Ascending aorta (tissue), 2 donors: ENCODE measurements at regions of chr21 and their contacts with region 1.

Region 1: DNA sequence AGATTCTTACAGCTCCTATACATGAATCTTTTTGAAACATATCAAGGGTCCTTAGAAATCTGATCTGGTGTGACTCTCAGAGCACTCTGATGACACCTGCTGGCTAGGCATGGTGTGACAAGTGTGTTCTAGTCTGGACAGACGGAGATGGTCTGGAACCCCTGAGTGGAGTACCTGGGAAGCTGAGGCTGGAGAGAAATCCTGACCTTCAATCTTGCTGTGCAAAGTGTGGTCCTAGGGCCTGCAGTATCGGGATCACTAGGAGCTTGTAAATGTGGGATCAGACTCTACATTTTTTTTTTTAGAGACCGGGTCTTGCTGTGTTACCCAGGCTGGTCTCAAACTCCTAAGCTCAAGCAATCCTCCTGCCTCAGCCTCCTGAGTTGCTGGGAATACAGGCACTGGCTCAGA is 78.6 kb upstream of the SOD1 start:
- DNase-seq: peak in 1 of 2 donors; percentile 75
- H3K4me3 ChIP-seq: no peak overlapping the region
- H3K27ac ChIP-seq: no peak overlapping the region
- H3K4me1 ChIP-seq: no peaks in the 10 kb centered on the region
- H3K27me3 ChIP-seq: no peaks in the 10 kb centered on the region
- CTCF ChIP-seq: peak; percentile 40 to 65 (median 59)

Region 2: DNA sequence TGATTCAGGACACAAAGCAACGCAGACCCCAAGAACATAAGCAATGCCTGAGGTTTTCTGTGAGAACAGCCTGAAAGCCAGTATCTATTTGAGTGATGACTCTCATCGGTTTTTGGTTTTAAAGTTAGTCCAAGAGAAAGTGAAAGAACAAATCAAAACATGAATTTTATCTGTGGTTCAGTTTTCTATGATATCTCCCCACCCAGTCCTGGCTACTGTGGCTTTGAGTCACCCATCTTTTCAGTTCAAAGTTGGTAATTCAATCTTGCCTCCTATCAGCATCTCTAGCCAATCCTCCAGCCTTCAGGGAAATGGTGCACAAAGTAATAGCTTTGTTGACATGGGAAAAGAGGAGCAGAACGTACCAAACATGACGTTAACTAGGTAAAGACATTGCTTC is 502.1 kb before region 1 on chr21:
- intact Hi-C with region 1: no loop called
- DNase-seq: no peak
- H3K4me3 ChIP-seq: no peak overlapping the region
- H3K27ac ChIP-seq: no peak overlapping the region
- H3K4me1 ChIP-seq: no peaks in the 10 kb centered on the region
- H3K27me3 ChIP-seq: no peaks in the 10 kb centered on the region
- CTCF ChIP-seq: no peak

Region 3: GRCh38 chr21:31198575-31198974 is 382.3 kb before region 1 on chr21:
- intact Hi-C with region 1: loop called (anchors 2 kb)
- DNase-seq: no peak
- H3K4me3 ChIP-seq: no peak overlapping the region
- H3K27ac ChIP-seq: no peak overlapping the region
- H3K4me1 ChIP-seq: no peaks in the 10 kb centered on the region
- H3K27me3 ChIP-seq: no peaks in the 10 kb centered on the region
- CTCF ChIP-seq: peak; percentile 32 to 52 (median 49)